ENCODE measurements at regions of chr10 and their contacts with region 1.

Region 1: DNA sequence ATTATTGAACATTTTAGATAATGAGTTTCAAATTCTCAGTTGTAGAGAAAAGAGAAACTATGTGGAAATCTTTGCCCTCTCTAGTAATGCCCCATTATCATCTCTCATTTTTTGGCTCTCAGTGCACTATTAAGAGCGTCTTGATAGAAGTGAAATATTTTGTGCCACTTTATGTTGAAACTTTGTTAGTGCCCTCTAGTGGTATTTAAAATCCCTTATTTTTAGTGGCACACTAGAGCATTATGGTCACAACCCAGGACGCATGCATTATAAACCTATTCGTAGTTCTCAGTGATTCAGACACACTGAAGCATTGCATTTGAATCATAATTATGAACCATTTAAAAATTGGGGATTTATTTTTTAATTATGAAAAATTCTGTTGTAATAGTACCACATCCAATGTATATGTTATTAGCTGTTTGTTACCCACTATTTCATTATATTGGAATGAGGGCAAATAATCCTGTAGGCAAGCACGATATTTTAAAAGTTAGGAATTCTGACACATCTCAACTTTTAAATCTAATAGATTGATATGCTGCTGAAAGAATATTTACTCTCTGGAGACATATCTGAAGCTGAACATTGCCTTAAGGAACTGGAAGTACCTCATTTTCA is 21.9 kb downstream of the PDCD4 start:
- DNase-seq: no peak
- H3K4me3 ChIP-seq: no peak overlapping the region
- H3K27ac ChIP-seq: no peak overlapping the region
- H3K4me1 ChIP-seq: no peaks in the 10 kb centered on the region
- H3K27me3 ChIP-seq: no peaks in the 10 kb centered on the region
- CTCF ChIP-seq: peak; percentile 51 to 59 (median 51)
- POLR2A ChIP-seq: no peak

Region 2: DNA sequence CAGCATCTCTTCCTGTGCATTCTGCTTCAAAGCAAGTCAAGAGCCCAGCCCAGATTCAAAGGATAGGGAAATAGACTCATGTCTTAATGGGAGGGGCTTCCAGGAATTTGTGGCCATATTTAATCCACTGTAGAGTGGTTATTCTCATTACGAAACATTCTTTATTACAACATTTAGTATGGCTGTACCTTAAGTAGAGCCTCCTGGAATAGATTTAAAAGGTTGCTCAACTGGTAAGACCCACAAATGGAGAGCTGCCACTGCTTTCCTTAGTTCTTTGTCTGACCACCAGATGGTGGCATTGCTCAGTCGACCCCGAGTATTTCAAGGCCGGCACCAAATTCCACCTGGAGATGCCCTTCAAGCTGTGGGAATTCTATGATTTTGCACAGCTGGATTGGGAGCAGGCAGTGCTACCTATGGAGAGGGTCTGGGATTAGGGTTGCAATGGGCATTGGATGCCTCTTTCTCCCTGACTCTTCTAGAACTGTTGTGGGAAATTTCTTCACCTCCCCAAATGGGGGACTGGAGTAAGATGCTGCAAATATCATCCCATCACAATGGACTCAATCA is 147.3 kb before region 1 on chr10:
- intact Hi-C with region 1: loop called (anchors 5 kb)
- DNase-seq: no peak
- H3K4me3 ChIP-seq: no peak overlapping the region
- H3K27ac ChIP-seq: no peak overlapping the region
- H3K4me1 ChIP-seq: no peaks in the 10 kb centered on the region
- H3K27me3 ChIP-seq: no peaks in the 10 kb centered on the region
- CTCF ChIP-seq: peak; percentile 30 to 92 (median 81)
- POLR2A ChIP-seq: no peak

Measured in vagina (tissue), 2 donors.